IMR-90 (cell line): ENCODE measurements at regions of chr4 and their contacts with region 1.

Region 1: GRCh38 chr4:41887821-41888686 is 47.2 kb upstream of the TMEM33 start:
- DNase-seq: peak; percentile 64
- ATAC-seq: no peak
- H3K4me3 ChIP-seq: no peak overlapping the region
- H3K27ac ChIP-seq: no peak overlapping the region
- H3K4me1 ChIP-seq: no peaks in the 10 kb centered on the region
- H3K27me3 ChIP-seq: peaks cover 37% of the 10 kb centered on the region
- CTCF ChIP-seq: peak; percentile 86
- POLR2A ChIP-seq: no peak
- RAD21 ChIP-seq: peak; percentile 68

Region 2: GRCh38 chr4:41814565-41814964 is 73.5 kb before region 1 on chr4:
- CTCF ChIA-PET with region 1: no interaction called
- POLR2A ChIA-PET with region 1: no interaction called
- dilution Hi-C with region 1: no loop called
- in situ Hi-C with region 1: no loop called
- intact Hi-C with region 1: loop called (anchors 5 kb)
- DNase-seq: peak; percentile 21
- ATAC-seq: peak; percentile 59
- H3K4me3 ChIP-seq: no peak overlapping the region
- H3K27ac ChIP-seq: no peak overlapping the region
- H3K4me1 ChIP-seq: no peaks in the 10 kb centered on the region
- H3K27me3 ChIP-seq: peaks cover 11% of the 10 kb centered on the region
- CTCF ChIP-seq: peak; percentile 46
- POLR2A ChIP-seq: no peak
- RAD21 ChIP-seq: peak; percentile 48